Activated B cell treated with CpG ODN at 0.5 μM for 24 hours (primary cell): ENCODE measurements at regions of chr10 and their contacts with region 1.

Region 1: GRCh38 chr10:63166742-63167258 is 33.7 kb downstream of the NRBF2 start:
- DNase-seq: no peak
- ATAC-seq: peak; percentile 88
- H3K4me3 Mint-ChIP-seq: no peak overlapping the region
- H3K27ac Mint-ChIP-seq: peak overlapping the region; percentile 12
- H3K4me1 Mint-ChIP-seq: peaks cover 4% of the 10 kb centered on the region
- H3K27me3 Mint-ChIP-seq: no peaks in the 10 kb centered on the region
- CTCF ChIP-seq: no peak

Region 2: DNA sequence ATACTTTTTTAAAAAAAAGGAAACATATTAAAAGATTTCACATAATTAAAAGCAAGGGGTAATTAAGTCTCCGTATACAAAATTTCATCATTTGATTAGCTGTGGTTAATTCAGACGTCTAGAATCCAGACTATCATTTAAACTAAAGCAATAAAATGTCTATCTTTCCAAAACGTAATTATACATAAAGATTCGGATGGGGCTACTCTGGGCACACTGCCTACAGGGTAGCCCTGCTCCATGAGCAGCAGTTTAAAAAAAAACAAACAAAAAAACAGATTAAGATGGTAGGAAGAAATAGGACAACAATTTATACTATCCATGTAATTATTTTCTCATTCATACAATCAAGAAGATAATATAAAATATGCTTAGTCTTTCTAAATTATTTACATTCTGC is 62.4 kb after region 1 on chr10:
- CTCF ChIA-PET with region 1: no interaction called
- POLR2A ChIA-PET with region 1: no interaction called
- intact Hi-C with region 1: no loop called
- DNase-seq: no peak
- ATAC-seq: no peak
- H3K4me3 Mint-ChIP-seq: no peak overlapping the region
- H3K27ac Mint-ChIP-seq: no peak overlapping the region
- H3K4me1 Mint-ChIP-seq: peaks cover 76% of the 10 kb centered on the region
- H3K27me3 Mint-ChIP-seq: no peaks in the 10 kb centered on the region
- CTCF ChIP-seq: no peak

Region 3: DNA sequence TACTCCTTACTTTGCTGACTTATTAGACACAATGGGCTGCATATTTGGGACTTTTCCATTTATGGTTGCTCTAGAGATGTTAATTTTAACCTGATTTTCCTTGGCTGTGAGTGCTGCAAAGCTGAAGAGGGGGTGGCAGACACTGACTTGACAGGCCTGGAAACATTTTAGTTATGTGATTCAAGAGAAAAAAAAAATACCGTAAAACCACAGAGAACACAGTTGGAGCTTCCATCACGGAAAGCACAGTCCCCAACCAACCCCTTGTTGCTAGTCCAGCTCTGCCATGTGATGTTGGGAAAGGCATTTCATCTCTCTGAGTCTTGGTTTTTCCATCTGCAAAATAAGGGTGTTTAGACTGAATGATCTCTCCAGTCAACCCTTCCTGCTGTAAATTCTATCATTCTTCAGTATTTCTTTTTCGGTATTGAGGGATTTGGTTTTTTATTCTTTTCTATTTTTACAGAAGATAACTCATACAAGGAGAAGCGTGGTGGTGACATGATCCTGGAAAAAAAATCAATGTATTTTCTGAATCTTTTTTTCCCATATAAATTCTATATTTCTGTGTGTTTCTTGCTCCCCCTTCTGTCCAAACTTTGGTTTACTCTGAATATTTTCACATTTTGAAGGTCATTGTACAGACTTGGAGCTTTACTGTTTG is 600.5 kb after region 1 on chr10:
- CTCF ChIA-PET with region 1: interaction called, 13 read pairs
- POLR2A ChIA-PET with region 1: no interaction called
- intact Hi-C with region 1: loop called (anchors 1 kb)
- DNase-seq: no peak
- ATAC-seq: no peak
- H3K4me3 Mint-ChIP-seq: no peak overlapping the region
- H3K27ac Mint-ChIP-seq: no peak overlapping the region
- H3K4me1 Mint-ChIP-seq: no peaks in the 10 kb centered on the region
- H3K27me3 Mint-ChIP-seq: no peaks in the 10 kb centered on the region
- CTCF ChIP-seq: no peak

Region 4: DNA sequence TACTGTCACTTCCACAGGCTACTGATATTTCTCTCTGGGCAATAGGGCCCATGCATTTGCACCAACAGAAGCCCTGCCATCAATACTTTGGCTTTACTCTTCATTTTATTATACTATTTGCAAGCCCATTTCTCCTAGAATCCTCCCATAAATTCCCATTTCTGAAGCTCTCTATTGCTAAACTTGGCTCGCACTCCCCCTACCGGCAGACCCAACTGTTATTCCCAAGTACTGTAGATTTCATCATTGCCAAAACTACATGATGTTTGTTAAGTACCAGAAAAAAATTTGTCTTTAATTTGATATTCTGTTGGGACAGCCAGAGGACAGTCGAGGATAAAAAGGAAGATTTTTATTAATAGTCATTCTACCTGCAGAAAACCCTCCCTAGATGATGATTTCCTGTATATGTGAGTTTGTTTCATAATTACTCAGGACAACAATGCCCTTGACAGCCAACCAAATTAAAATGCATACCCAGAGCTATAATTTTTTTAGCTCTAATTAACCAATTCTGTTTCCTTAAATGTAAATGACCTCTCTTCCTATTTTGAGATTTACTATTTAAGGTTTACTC is 653.0 kb after region 1 on chr10:
- CTCF ChIA-PET with region 1: no interaction called
- POLR2A ChIA-PET with region 1: no interaction called
- intact Hi-C with region 1: loop called (anchors 5 kb)
- DNase-seq: no peak
- ATAC-seq: no peak
- H3K4me3 Mint-ChIP-seq: no peak overlapping the region
- H3K27ac Mint-ChIP-seq: no peak overlapping the region
- H3K4me1 Mint-ChIP-seq: no peaks in the 10 kb centered on the region
- H3K27me3 Mint-ChIP-seq: peaks cover 33% of the 10 kb centered on the region
- CTCF ChIP-seq: no peak

Region 5: GRCh38 chr10:63866075-63866746 is 699.4 kb after region 1 on chr10:
- CTCF ChIA-PET with region 1: interaction called, 4 read pairs
- POLR2A ChIA-PET with region 1: no interaction called
- intact Hi-C with region 1: loop called (anchors 5 kb)
- DNase-seq: no peak
- ATAC-seq: no peak
- H3K4me3 Mint-ChIP-seq: no peak overlapping the region
- H3K27ac Mint-ChIP-seq: no peak overlapping the region
- H3K4me1 Mint-ChIP-seq: peaks cover 6% of the 10 kb centered on the region
- H3K27me3 Mint-ChIP-seq: peaks cover 33% of the 10 kb centered on the region
- CTCF ChIP-seq: peak; percentile 55